GM18951 (cell line): ENCODE measurements at regions of chr1 and their contacts with region 1.

Region 1: GRCh38 chr1:17494114-17494729 is 45.3 kb upstream of the ARHGEF10L start:
- POLR2A ChIP-seq: no peak

Region 2: DNA sequence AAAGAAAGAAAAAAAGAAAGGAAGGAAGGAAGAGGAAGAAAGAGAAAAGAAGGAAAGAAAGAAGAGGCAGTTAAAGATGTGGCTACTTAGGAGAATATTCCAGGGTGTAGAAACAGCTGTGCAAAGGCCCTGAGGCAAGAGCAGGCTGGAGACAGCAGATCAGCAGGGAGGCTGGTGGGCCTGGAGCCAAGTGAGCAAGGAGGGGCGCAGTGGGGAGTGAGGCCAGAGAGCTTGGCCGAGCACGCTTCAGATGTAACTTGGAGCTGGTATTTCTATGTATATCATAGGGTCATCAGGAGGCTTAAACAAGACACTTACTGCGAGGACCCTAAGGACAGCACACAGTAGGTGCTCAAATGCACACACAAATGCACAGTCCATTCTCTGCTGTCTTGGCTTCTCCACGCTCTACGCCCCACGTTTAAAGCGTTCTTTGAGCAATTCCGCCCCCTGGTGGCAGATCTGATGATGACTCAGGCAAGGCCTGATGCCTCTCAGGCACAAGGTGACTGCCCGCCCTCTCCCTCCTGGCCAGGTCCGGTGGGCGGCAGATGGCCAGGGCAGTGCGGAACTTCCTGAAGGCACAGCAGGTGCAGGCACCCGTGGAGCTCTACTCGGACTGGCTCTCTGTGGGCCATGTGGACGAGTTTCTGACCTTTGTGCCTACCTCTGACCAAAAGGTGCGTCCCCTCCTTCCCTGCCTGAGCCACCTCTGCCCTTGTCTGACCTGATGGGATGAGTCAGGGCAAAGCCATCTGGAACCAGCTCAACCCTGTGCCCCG is 257.3 kb before region 1 on chr1:
- in situ Hi-C with region 1: no loop called
- POLR2A ChIP-seq: no peak

Region 3: GRCh38 chr1:17355898-17356297 is 138.3 kb before region 1 on chr1:
- in situ Hi-C with region 1: no loop called
- POLR2A ChIP-seq: no peak

Region 4: GRCh38 chr1:17611975-17612374 is 117.8 kb after region 1 on chr1:
- in situ Hi-C with region 1: loop called (anchors 5 kb)
- POLR2A ChIP-seq: no peak